Dorsolateral prefrontal cortex (tissue), 120 donors: ENCODE measurements at regions of chr6 and their contacts with region 1.

Region 1: DNA sequence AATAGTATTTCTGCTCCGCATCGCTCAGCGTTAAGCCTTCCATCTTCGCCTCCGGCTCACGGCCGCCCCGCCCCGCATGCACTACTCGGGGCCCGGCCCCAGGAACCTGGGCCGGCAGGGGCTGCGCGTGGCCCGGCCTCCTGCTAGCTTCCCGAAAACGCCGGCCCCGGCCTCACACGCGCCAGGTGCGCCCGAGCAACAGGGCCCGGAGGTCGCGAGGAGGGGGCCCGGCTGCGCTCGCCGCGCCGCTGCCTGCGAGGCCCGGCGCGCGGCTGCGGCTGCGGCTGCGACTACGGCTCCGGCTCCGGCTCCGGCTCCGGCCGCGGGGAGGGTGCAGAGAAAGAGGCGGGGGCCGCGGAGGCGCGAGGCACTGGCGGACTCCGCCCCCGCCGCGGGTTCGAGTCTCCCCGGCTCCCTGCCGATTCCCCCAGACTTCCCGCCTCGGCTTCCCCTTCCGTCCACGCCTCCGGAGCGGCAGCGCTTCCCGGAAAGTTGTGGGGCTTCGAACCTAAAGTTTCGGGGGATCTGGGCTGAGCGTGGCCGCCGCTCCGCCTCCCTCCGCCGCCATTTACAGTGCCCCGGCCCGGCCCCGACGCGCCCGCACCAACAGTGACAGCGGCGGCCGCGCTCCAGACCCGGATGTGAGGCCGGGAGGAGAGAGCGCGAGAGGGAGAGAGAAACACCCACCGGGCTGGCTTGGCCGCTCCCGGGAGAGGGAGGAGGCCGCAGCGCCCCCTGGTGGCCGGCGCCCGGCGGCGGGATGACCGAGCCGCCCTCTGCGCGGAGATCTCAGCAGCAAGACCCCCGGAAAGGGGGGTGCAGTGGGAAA is at the start of gene REPS1:
- DNase-seq: peak; percentile 76 to 92 (median 86)
- H3K4me3 ChIP-seq: peak within 1 kb of the TSS; percentile 62 to 98 (median 89)
- H3K27ac ChIP-seq: peak within 1 kb of the TSS in 58 of 59 donors; percentile 18 to 96 (median 86)
- H3K27me3 ChIP-seq: no peaks in the 10 kb centered on the region
- CTCF ChIP-seq: peak; percentile 96 to 100 (median 99)
- total RNA-seq, gene REPS1: 61.3 to 151 (median 92.9) TPM

Region 2: DNA sequence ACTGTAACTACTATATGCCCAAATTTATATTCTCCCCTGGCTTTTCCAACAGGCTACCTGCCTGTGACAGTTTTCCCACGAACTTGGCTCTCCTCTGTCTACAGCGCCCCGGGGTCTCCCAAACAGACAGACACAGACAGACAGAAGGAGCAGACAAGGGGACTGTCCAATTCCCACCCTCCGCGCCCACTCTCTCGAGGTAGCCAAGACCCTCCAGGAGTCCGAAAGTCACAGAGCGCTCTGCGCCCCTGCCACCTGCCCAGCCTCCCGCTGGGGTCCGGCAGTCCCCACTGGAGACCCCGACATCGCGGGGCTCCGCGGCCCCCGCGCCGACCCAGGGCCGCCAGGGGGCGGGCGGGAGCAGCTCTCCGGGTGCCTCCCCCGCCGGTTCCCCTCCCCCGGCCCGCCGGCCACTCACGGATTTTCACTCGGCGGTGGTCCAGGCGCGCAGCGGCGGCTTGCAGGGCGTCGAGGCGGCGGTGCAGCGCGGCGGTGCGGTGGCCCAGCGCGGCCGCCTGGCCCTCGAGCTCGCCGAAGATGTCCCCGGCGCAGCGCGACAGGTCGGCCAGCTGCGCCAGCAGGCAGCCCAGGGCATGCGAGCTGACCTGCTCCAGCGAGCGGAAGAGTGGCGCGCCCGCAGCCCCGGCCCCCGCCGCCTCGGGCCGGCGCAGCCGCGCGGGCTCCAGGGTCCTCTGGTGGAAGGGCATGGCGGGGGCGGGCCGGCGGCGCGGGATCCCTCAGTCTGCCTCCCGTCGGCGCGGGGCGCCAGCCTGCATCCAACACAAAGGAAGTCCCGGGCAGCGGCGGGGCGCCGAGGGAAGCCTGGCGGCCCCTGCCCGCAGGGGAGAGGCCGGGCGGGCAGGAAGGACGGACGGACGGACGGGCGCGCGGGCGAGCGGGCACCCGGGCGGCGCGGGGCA is 295.5 kb before region 1 on chr6:
- intact Hi-C with region 1: loop called in 1 of 2 experiments (anchors 10 kb)
- DNase-seq: peak in 6 of 10 donors; percentile 29 to 75 (median 46)
- H3K4me3 ChIP-seq: peak overlapping the region; percentile 36 to 79 (median 64)
- H3K27ac ChIP-seq: peak overlapping the region in 47 of 59 donors; percentile 8 to 85 (median 55)
- H3K27me3 ChIP-seq: peaks cover 0 to 35% (median 7%) of the 10 kb centered on the region in 45 donors
- CTCF ChIP-seq: peak; percentile 20 to 92 (median 72)

Region 3: GRCh38 chr6:138817822-138818308 is 170.0 kb before region 1 on chr6:
- intact Hi-C with region 1: loop called (anchors 2 to 5 kb)
- DNase-seq: no peak
- H3K4me3 ChIP-seq: no peak overlapping the region
- H3K27ac ChIP-seq: no peak overlapping the region
- H3K27me3 ChIP-seq: no peaks in the 10 kb centered on the region
- CTCF ChIP-seq: no peak

Region 4: DNA sequence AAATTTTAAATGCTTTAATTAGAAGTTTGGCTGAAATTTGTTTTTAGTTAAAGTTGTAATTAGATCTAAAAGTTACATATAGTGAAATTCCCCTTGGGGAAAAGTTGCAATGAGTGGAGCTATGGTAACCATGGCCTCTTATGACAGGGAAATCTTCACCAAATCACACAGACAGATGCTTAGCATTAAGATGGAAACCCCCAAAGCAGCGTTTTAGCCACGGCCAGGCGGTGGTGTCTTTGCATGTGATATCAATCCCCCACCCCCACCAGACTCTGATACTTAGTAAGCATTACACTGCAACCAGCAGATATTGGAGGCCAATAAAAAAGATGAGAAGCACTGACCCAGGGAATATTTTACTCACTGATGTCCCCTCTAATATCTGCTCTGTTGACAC is 75.5 kb before region 1 on chr6:
- intact Hi-C with region 1: no loop called
- DNase-seq: no peak
- H3K4me3 ChIP-seq: no peak overlapping the region
- H3K27ac ChIP-seq: no peak overlapping the region
- H3K27me3 ChIP-seq: no peaks in the 10 kb centered on the region
- CTCF ChIP-seq: no peak

Region 5: GRCh38 chr6:139028658-139029469 is 41.0 kb after region 1 on chr6 and contains the start of gene ABRACL:
- intact Hi-C with region 1: loop called in 1 of 2 experiments (anchors 5 kb)
- DNase-seq: peak in 9 of 10 donors; percentile 5 to 67 (median 57)
- H3K4me3 ChIP-seq: peak within 1 kb of the TSS; percentile 68 to 96 (median 83)
- H3K27ac ChIP-seq: peak within 1 kb of the TSS in 51 of 59 donors; percentile 7 to 85 (median 67)
- H3K27me3 ChIP-seq: no peaks in the 10 kb centered on the region
- CTCF ChIP-seq: peak in 1 of 56 donors; percentile 14
- total RNA-seq, gene ABRACL: 2.9 to 23.0 (median 14.4) TPM

Region 6: GRCh38 chr6:139134817-139135581 is 147.1 kb after region 1 on chr6 and contains the start of gene HECA:
- intact Hi-C with region 1: loop called (anchors 5 kb)
- DNase-seq: peak; percentile 93 to 98 (median 97)
- H3K4me3 ChIP-seq: peak within 1 kb of the TSS; percentile 57 to 88 (median 79)
- H3K27ac ChIP-seq: peak within 1 kb of the TSS in 57 of 59 donors; percentile 45 to 97 (median 88)
- H3K27me3 ChIP-seq: no peaks in the 10 kb centered on the region
- CTCF ChIP-seq: peak in 2 of 56 donors; percentile 10 to 17
- total RNA-seq, gene HECA: 19.3 to 43.8 (median 30.8) TPM

Region 7: DNA sequence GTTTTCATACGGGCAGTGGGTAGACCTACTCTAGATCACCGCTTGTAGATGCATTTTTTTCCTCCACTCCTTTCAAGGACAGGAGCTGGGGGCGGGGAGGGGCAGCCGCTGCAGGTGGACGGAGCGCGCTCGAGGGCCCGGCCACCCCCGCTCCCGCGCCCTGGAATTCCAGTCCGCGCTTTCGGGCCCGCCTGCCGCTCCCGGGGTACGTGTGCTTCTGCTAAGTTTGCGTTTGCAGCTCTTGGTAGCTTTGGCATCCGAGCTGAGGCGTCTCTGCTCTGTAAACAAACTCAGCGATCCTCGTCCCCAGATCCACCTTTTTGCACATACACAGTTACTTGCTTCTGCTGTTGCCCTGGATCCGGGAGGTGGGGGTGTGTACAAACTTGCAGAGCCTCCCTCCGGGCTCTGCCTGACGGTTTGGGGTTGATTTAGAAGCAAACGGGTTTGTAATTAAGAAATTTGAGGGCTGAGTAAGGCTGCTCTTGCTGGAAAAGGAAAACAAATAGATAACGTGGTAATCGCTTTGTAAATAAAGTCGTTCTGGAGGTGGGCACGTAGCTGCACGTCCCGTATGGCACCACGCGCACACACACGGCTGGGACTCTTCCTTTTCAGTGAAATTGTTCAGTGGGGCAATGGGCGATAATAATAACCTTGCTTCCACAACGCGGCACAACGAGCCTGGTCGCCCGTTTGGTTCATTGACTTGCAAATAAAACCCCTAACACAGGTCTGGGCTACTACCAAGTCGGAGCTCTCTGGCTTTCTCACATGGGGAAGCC is 387.6 kb after region 1 on chr6:
- intact Hi-C with region 1: loop called in 1 of 2 experiments (anchors 5 kb)
- DNase-seq: peak; percentile 67 to 93 (median 86)
- H3K4me3 ChIP-seq: peak overlapping the region; percentile 60 to 98 (median 87)
- H3K27ac ChIP-seq: peak overlapping the region; percentile 25 to 99 (median 96)
- H3K27me3 ChIP-seq: no peaks in the 10 kb centered on the region
- CTCF ChIP-seq: peak in 3 of 56 donors; percentile 2 to 20 (median 4)